ENCODE measurements at regions of chr14 and their contacts with region 1.

Region 1: DNA sequence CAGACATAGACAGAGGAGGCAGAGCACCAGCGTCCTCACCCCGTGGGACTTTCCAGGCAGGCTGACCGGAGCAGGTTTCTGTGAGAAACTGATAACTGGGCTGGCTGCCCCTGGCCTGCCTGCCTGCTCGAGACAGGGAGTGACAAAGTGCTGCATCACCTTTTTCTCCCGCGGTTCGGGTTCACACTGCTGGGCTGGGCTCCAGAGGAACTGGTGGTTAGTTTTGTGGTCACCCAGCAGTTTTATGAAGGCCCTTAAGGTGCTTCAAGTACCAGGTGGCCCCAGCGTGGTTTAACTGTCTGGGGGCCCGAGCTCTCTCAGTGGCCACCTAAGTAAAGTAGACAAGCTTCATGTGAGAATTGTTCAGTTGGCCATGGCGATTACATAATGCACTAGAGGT is 1073.6 kb downstream of the BCL11B start:
- DNase-seq: peak in 7 of 9 experiments; percentile 35 to 79 (median 60)
- ATAC-seq: peak; percentile 42
- H3K4me3 ChIP-seq: peak overlapping the region in 1 of 2 experiments; percentile 12
- H3K4me3 Mint-ChIP-seq: peak overlapping the region; percentile 54
- H3K27ac ChIP-seq: peak overlapping the region in 1 of 2 experiments; percentile 51
- H3K27ac Mint-ChIP-seq: peak overlapping the region; percentile 85
- H3K4me1 ChIP-seq: peaks cover 68% of the 10 kb centered on the region
- H3K4me1 Mint-ChIP-seq: peaks cover 93% of the 10 kb centered on the region
- H3K27me3 ChIP-seq: no peaks in the 10 kb centered on the region
- H3K27me3 Mint-ChIP-seq: no peaks in the 10 kb centered on the region
- CTCF ChIP-seq: no peak

Region 2: DNA sequence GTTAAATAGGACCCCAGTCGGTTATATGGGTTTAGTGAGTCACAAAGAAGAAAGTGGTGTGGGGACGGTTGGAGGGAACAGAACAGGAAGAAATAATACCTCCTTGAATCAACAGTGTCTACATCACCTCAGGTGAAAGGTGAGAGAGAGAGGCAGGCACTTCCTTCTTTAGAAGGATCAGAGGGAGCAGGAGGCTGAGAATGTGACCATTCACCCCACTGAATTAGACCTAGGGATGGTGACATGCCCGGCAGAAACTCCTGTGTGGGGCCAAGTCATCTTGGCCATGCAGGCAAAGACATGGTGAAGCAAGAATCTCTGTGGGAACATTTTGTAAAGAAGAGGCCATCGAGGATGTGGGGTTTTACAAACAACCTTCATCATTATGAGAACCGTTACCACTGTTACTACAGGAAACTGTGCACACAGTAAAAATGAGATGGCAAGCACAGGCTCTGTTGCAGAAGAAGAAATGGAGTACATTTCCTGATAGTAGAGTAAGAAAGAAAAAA is 204.3 kb before region 1 on chr14:
- CTCF ChIA-PET with region 1: no interaction called
- POLR2A ChIA-PET with region 1: no interaction called
- intact Hi-C with region 1: no loop called
- DNase-seq: peak in 7 of 9 experiments; percentile 7 to 79 (median 58)
- ATAC-seq: peak; percentile 81
- H3K4me3 ChIP-seq: no peak overlapping the region
- H3K4me3 Mint-ChIP-seq: peak overlapping the region; percentile 9
- H3K27ac ChIP-seq: peak overlapping the region; percentile 62 to 83
- H3K27ac Mint-ChIP-seq: peak overlapping the region; percentile 98
- H3K4me1 ChIP-seq: peaks cover 66% of the 10 kb centered on the region
- H3K4me1 Mint-ChIP-seq: peaks cover 84% of the 10 kb centered on the region
- H3K27me3 ChIP-seq: no peaks in the 10 kb centered on the region
- H3K27me3 Mint-ChIP-seq: no peaks in the 10 kb centered on the region
- CTCF ChIP-seq: no peak

Region 3: GRCh38 chr14:98444077-98444476 is 245.7 kb after region 1 on chr14:
- CTCF ChIA-PET with region 1: no interaction called
- POLR2A ChIA-PET with region 1: no interaction called
- intact Hi-C with region 1: loop called in 1 of 2 experiments (anchors 10 kb)
- DNase-seq: peak; percentile 9 to 79 (median 51)
- ATAC-seq: peak; percentile 95
- H3K4me3 ChIP-seq: peak overlapping the region in 1 of 2 experiments; percentile 18
- H3K4me3 Mint-ChIP-seq: peak overlapping the region; percentile 68
- H3K27ac ChIP-seq: peak overlapping the region; percentile 67 to 78
- H3K27ac Mint-ChIP-seq: peak overlapping the region; percentile 100
- H3K4me1 ChIP-seq: peaks cover 38% of the 10 kb centered on the region
- H3K4me1 Mint-ChIP-seq: peaks cover 53% of the 10 kb centered on the region
- H3K27me3 ChIP-seq: no peaks in the 10 kb centered on the region
- H3K27me3 Mint-ChIP-seq: no peaks in the 10 kb centered on the region
- CTCF ChIP-seq: no peak

Region 4: GRCh38 chr14:98548071-98548686 is 349.8 kb after region 1 on chr14:
- CTCF ChIA-PET with region 1: no interaction called
- POLR2A ChIA-PET with region 1: no interaction called
- intact Hi-C with region 1: loop called in 1 of 2 experiments (anchors 10 kb)
- DNase-seq: peak in 5 of 9 experiments; percentile 6 to 63 (median 32)
- ATAC-seq: no peak
- H3K4me3 ChIP-seq: no peak overlapping the region
- H3K4me3 Mint-ChIP-seq: no peak overlapping the region
- H3K27ac ChIP-seq: no peak overlapping the region
- H3K27ac Mint-ChIP-seq: peak overlapping the region; percentile 58
- H3K4me1 ChIP-seq: peaks cover 11% of the 10 kb centered on the region
- H3K4me1 Mint-ChIP-seq: peaks cover 13% of the 10 kb centered on the region
- H3K27me3 ChIP-seq: no peaks in the 10 kb centered on the region
- H3K27me3 Mint-ChIP-seq: no peaks in the 10 kb centered on the region
- CTCF ChIP-seq: no peak

Measured in CD8-positive, alpha-beta T cell (primary cell).